ENCODE measurements at regions of chr3 and their contacts with region 1.

Region 1: DNA sequence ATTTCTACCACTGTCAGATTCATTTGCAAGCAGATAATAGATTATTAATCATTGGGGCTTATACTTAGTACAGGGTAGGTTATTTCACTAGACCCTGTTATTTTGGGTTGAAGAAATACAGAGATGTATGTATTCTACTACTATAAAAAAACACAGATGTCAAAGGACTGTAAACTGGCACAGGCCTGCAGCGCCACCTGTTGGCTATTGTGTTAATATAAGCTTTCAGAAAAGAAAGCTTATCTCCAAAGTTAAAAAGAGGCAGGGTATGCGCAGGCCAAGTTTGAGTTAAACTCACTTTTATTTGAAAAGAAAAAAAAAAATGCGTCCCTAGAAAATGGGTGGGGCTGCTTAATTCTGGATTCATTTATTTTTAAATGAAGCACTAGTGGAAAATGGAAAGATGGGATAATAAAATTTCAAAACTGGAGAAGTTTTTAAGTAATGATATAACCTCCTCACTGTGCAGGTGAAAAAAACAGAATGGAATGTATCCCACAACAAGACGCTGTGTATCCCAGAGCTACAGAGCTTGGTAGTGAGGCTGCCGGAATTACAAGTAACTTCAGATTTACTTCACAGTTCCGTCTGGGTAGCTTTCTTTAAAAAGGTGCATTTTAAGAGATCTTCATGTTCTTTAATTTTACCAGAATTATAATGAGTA is 407.2 kb upstream of the TGFBR2 start:
- DNase-seq: no peak
- H3K4me3 ChIP-seq: no peak overlapping the region
- CTCF ChIP-seq: peak; percentile 57

Region 2: DNA sequence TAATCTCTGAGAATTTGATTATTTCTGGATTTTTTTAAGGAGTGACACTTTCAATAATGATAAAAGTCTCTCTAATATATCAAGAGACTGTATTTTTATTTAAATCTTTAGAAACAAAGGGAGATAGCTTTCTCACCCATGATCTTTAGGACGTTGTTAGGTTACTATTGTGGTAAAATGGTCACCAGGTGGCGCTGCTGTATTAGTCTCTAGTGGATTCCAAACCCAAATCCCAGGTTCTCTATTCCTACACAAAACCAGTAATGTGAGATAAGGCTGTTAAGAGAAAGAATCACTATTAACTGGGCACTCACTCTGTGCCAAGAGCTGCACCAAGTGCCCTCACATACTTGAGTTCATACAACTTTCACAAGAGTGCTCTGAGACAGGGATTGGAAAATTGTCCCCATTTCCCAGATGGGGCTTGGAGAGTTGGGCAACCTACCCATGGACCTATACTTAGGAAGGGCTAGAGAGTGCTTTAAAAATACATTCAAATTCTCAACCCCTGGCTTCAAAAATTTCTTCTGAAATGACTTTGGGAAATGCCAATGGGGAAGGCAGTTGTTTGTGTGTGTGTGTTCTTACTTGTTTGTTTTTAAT is 186.2 kb before region 1 on chr3:
- CTCF ChIA-PET with region 1: interaction called, 27 read pairs
- POLR2A ChIA-PET with region 1: no interaction called
- DNase-seq: no peak
- H3K4me3 ChIP-seq: no peak overlapping the region
- CTCF ChIP-seq: peak; percentile 39

Region 3: DNA sequence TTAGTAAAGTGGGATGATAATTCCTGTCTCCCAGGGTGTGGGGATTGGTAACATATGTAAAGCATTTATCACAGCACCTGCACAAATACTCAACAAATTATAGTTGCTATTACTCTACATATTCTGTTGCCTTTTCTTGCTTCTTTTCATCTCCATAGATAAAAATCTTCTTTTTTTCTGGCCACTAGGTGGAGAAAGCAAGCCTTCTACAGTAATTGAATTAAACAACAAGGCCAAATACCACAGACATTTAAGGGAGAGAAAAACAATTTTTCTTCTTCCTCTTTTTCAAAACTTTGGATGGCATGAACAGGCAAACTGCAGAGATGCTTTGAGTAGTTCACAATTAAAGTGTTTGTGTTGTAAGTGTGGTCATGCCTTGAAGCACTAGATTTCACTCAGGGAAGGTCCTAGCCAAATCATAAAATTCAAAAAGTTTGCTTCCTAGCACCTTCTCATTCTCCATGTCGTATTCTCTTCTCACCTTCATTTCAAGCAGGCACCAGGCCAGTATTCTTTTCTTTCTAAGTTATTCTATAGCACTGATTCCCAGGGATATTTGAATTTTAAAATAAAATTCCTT is 86.2 kb before region 1 on chr3:
- CTCF ChIA-PET with region 1: interaction called, 46 read pairs
- POLR2A ChIA-PET with region 1: no interaction called
- DNase-seq: peak; percentile 21
- H3K4me3 ChIP-seq: no peak overlapping the region
- CTCF ChIP-seq: peak; percentile 32

Region 4: DNA sequence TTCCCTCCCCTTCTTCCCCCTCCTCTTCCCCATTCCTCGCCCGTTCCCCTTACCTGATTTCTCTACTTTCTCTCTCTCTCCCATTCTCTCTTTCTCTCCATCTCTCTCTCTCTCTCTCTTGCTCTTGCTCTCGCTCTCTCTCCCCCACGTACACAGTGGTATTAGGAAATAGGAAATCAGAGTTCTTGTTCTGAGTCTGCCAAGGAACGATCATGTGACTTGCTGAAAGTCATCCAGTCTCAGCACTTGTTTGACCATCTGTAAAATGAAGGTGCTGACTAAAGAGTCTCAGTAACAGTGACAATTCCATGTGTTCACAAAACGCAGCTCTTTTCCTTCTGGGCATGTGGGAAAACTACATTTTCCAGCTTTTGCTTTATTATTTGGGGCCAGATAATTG is 37.9 kb before region 1 on chr3:
- CTCF ChIA-PET with region 1: interaction called, 15 read pairs
- POLR2A ChIA-PET with region 1: no interaction called
- DNase-seq: no peak
- H3K4me3 ChIP-seq: no peak overlapping the region
- CTCF ChIP-seq: no peak

Region 5: GRCh38 chr3:30174357-30174756 is 24.9 kb before region 1 on chr3:
- CTCF ChIA-PET with region 1: interaction called, 16 read pairs
- POLR2A ChIA-PET with region 1: no interaction called
- DNase-seq: no peak
- H3K4me3 ChIP-seq: no peak overlapping the region
- CTCF ChIP-seq: no peak

Region 6: GRCh38 chr3:30188713-30189112 is 10.5 kb before region 1 on chr3:
- CTCF ChIA-PET with region 1: interaction called, 27 read pairs
- POLR2A ChIA-PET with region 1: no interaction called
- DNase-seq: no peak
- H3K4me3 ChIP-seq: no peak overlapping the region
- CTCF ChIP-seq: no peak

Region 7: DNA sequence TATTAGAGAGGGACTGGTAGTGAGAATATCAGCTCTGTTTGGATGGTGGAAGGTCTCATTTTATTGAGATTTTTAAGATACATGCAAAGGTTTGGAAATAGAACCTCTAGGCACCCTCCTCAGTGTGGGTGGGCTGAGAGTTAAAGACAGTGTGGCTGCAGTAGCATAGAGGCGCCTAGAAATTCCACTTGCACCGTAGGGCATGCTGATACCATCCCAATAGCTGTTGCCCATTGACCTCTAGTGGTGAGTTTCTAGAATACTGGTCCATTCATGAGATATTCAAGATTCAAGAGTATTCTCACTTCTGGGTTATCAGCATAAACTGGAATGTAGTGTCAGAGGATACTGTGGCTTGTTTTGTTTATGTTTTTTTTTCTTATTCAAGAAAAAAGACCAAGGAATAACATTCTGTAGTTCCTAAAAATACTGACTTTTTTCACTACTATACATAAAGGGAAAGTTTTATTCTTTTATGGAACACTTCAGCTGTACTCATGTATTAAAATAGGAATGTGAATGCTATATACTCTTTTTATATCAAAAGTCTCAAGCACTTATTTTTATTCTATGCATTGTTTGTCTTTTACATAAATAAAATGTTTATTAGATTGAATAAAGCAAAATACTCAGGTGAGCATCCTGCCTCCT is 494.4 kb after region 1 on chr3:
- CTCF ChIA-PET with region 1: interaction called, 44 read pairs
- POLR2A ChIA-PET with region 1: no interaction called
- DNase-seq: no peak
- H3K4me3 ChIP-seq: no peak overlapping the region
- CTCF ChIP-seq: peak; percentile 72